GM12878 (cell line): ENCODE measurements at regions of chr4 and their contacts with region 1.

Region 1: GRCh38 chr4:22473268-22473667 is 42.6 kb downstream of the ADGRA3 start:
- DNase-seq: no peak
- ATAC-seq: 0 out of 3 replicates have a peak, but pooled peaks have one; percentile 16
- H3K4me3 ChIP-seq: no peak overlapping the region
- H3K27ac ChIP-seq: no peak overlapping the region
- H3K4me1 ChIP-seq: no peaks in the 10 kb centered on the region
- H3K27me3 ChIP-seq: no peaks in the 10 kb centered on the region
- CTCF ChIP-seq: no peak
- EP300 ChIP-seq: no peak
- POLR2A ChIP-seq: no peak
- RAD21 ChIP-seq: no peak

Region 2: GRCh38 chr4:22416403-22416802 is 56.9 kb before region 1 on chr4:
- CTCF ChIA-PET with region 1: interaction called, 13 read pairs
- POLR2A ChIA-PET with region 1: interaction called, 3 read pairs
- RAD21 ChIA-PET with region 1: interaction called, 6 read pairs
- SMC1A ChIA-PET with region 1: interaction called, 11 read pairs
- in situ Hi-C with region 1: no loop called
- intact Hi-C with region 1: no loop called
- DNase-seq: no peak
- ATAC-seq: no peak; the same call in 2 of the 3 replicates
- H3K4me3 ChIP-seq: no peak overlapping the region
- H3K27ac ChIP-seq: no peak overlapping the region
- H3K4me1 ChIP-seq: no peaks in the 10 kb centered on the region
- H3K27me3 ChIP-seq: no peaks in the 10 kb centered on the region
- CTCF ChIP-seq: no peak
- EP300 ChIP-seq: no peak
- POLR2A ChIP-seq: no peak
- RAD21 ChIP-seq: no peak

Region 3: DNA sequence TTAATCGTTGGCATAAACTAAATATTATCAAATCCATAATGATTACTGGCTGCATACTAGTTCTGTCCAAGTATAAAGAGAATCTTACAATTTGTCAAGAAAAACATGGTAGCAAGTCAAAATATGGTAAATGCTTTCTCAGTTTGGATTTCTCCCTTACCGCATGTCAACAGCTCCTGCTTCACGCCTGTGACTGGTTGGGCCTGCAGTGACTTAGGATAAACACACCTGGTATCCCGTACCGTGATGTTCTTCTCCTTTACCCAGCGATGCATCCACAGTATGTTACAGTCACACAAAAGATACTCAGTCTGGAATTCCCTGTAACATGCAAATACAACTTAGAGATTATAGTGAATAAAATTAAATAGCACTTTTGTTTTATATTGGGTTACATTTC is 28.5 kb before region 1 on chr4:
- CTCF ChIA-PET with region 1: interaction called, 5 read pairs
- POLR2A ChIA-PET with region 1: interaction called, 4 read pairs
- RAD21 ChIA-PET with region 1: interaction called, 11 read pairs
- SMC1A ChIA-PET with region 1: interaction called, 31 read pairs
- in situ Hi-C with region 1: no loop called
- intact Hi-C with region 1: no loop called
- DNase-seq: no peak
- ATAC-seq: no peak; the same call in 1 of the 3 replicates
- H3K4me3 ChIP-seq: no peak overlapping the region
- H3K27ac ChIP-seq: no peak overlapping the region
- H3K4me1 ChIP-seq: no peaks in the 10 kb centered on the region
- H3K27me3 ChIP-seq: no peaks in the 10 kb centered on the region
- CTCF ChIP-seq: no peak
- EP300 ChIP-seq: no peak
- POLR2A ChIP-seq: no peak
- RAD21 ChIP-seq: no peak

Region 4: GRCh38 chr4:22463179-22463578 is 10.1 kb before region 1 on chr4:
- CTCF ChIA-PET with region 1: interaction called, 23 read pairs
- POLR2A ChIA-PET with region 1: interaction called, 6 read pairs
- RAD21 ChIA-PET with region 1: interaction called, 13 read pairs
- SMC1A ChIA-PET with region 1: interaction called, 49 read pairs
- in situ Hi-C with region 1: no loop called
- intact Hi-C with region 1: no loop called
- DNase-seq: no peak
- ATAC-seq: peak; percentile 65
- H3K4me3 ChIP-seq: no peak overlapping the region
- H3K27ac ChIP-seq: no peak overlapping the region
- H3K4me1 ChIP-seq: no peaks in the 10 kb centered on the region
- H3K27me3 ChIP-seq: no peaks in the 10 kb centered on the region
- CTCF ChIP-seq: no peak
- EP300 ChIP-seq: no peak
- POLR2A ChIP-seq: no peak
- RAD21 ChIP-seq: no peak

Region 5: DNA sequence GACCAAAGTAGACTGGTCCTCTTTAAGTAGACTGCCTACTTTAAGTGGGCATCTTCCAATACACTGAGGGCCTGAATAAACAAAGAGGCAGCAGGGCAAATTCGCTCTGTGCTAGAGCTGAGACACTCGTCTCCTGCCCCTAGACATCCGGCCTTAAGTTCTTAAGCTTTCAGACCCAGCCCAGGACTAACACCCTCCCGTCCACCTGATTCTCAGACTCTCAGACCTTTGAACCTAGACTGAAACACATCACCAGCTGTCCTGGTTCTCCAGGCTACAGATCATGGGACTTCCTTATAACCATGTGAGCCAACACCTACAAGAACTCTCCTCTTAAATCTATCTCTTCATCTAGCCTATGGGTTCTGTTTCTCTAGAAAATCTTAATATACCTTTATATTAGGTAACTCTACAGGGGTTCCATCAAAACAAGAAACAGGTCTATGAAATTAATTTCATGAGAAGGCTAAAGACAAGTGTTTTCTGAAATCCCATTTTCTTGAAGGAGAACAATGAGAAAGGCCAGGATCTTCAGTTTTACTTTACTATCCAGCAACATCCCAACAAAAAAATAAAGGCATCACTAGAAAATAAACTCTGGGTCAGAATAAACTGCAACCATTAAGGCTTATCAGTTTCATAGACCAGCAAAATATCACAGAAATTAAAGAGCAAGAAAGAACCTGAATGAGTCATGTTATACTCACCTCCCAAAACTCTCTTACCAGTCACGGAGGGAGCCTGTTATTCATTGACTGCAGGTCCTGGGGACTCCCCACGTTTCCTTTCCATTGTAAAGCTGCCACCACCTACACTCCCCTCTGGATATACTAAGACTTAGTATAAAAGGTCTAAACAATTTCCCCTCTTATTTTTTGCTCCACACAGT is 27.8 kb after region 1 on chr4:
- CTCF ChIA-PET with region 1: interaction called, 13 read pairs
- POLR2A ChIA-PET with region 1: interaction called, 17 read pairs
- RAD21 ChIA-PET with region 1: interaction called, 22 read pairs
- SMC1A ChIA-PET with region 1: interaction called, 24 read pairs
- in situ Hi-C with region 1: no loop called
- intact Hi-C with region 1: no loop called
- DNase-seq: peak; percentile 28
- ATAC-seq: peak; percentile 77
- H3K4me3 ChIP-seq: no peak overlapping the region
- H3K27ac ChIP-seq: no peak overlapping the region
- H3K4me1 ChIP-seq: no peaks in the 10 kb centered on the region
- H3K27me3 ChIP-seq: no peaks in the 10 kb centered on the region
- CTCF ChIP-seq: no peak
- EP300 ChIP-seq: peak in 1 of 2 experiments; percentile 70; a peak in 1 of 4 replicates
- POLR2A ChIP-seq: no peak
- RAD21 ChIP-seq: no peak

Region 6: DNA sequence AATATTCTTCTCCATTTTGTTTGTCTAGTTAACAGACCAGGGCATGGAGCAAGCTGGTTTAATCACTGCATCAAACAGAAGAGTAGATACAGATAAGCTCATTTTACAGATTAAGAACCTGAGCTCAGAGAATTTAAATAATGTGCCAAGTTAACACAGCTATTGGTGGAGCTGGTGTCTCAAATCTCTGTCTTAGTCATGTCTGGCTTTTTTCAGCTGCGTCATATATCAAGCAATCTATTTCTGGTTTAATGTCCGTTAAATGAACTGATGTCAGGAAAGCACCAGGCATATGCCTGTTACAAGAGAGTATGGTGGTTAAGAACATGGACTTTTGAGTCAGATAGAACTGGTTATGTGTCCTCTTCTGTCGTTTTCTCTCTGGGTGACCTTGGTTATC is 122.4 kb after region 1 on chr4:
- CTCF ChIA-PET with region 1: interaction called, 7 read pairs
- POLR2A ChIA-PET with region 1: no interaction called
- RAD21 ChIA-PET with region 1: interaction called, 27 read pairs
- SMC1A ChIA-PET with region 1: interaction called, 11 read pairs
- in situ Hi-C with region 1: no loop called
- intact Hi-C with region 1: no loop called
- DNase-seq: peak; percentile 17
- ATAC-seq: peak; percentile 84
- H3K4me3 ChIP-seq: no peak overlapping the region
- H3K27ac ChIP-seq: no peak overlapping the region
- H3K4me1 ChIP-seq: no peaks in the 10 kb centered on the region
- H3K27me3 ChIP-seq: no peaks in the 10 kb centered on the region
- CTCF ChIP-seq: no peak
- EP300 ChIP-seq: peak; percentile 58 to 75; a peak in 2 of 4 replicates
- POLR2A ChIP-seq: no peak
- RAD21 ChIP-seq: no peak